ENCODE measurements at regions of chrX and their contacts with region 1.

Region 1: GRCh38 chrX:129726307-129727111 is 12.3 kb upstream of the XPNPEP2 start:
- DNase-seq: peak; percentile 52
- H3K4me3 Mint-ChIP-seq: no peak overlapping the region
- H3K27ac Mint-ChIP-seq: no peak overlapping the region
- H3K4me1 Mint-ChIP-seq: peaks cover 31% of the 10 kb centered on the region
- H3K27me3 Mint-ChIP-seq: no peaks in the 10 kb centered on the region

Region 2: DNA sequence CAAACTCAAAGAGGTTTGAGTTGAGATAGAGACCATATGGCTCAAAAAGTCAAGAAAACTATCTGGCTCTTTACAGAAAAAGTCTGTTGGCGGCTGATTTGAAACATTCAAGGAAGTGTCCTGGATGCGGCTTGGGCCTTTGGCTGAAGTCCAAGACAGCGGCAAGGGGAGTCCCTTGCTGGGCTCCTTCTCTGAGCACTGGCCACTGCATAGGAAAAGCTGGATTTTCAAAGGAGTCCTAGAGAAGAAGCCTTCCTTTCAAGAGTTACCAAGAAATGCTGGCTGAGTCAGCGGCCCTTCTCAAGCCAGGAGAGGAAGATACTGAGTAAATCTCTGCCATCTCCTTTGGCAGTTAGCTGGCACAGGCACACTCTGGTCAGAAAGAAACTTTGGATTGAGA is 83.9 kb before region 1 on chrX:
- CTCF ChIA-PET with region 1: interaction called, 70 read pairs
- POLR2A ChIA-PET with region 1: no interaction called
- intact Hi-C with region 1: loop called (anchors 1 kb)
- DNase-seq: no peak
- H3K4me3 Mint-ChIP-seq: no peak overlapping the region
- H3K27ac Mint-ChIP-seq: no peak overlapping the region
- H3K4me1 Mint-ChIP-seq: no peaks in the 10 kb centered on the region
- H3K27me3 Mint-ChIP-seq: no peaks in the 10 kb centered on the region

Region 3: GRCh38 chrX:129654419-129655165 is 71.9 kb before region 1 on chrX and contains the start of gene APLN:
- CTCF ChIA-PET with region 1: interaction called, 9 read pairs
- POLR2A ChIA-PET with region 1: no interaction called
- intact Hi-C with region 1: loop called (anchors 5 kb)
- DNase-seq: peak; percentile 22
- H3K4me3 Mint-ChIP-seq: peak within 1 kb of the TSS; percentile 59
- H3K27ac Mint-ChIP-seq: no peak within 1 kb of the TSS
- H3K4me1 Mint-ChIP-seq: peaks cover 8% of the 10 kb centered on the region
- H3K27me3 Mint-ChIP-seq: peaks cover 15% of the 10 kb centered on the region
- total RNA-seq, gene APLN: 0.26 to 0.36 TPM

Region 4: GRCh38 chrX:129772796-129773431 is 46.4 kb after region 1 on chrX:
- CTCF ChIA-PET with region 1: no interaction called
- POLR2A ChIA-PET with region 1: no interaction called
- intact Hi-C with region 1: no loop called
- DNase-seq: peak; percentile 70
- H3K4me3 Mint-ChIP-seq: peak overlapping the region; percentile 48
- H3K27ac Mint-ChIP-seq: peak overlapping the region; percentile 92
- H3K4me1 Mint-ChIP-seq: peaks cover 64% of the 10 kb centered on the region
- H3K27me3 Mint-ChIP-seq: no peaks in the 10 kb centered on the region

Region 5: GRCh38 chrX:129804806-129805205 is 78.3 kb after region 1 on chrX:
- CTCF ChIA-PET with region 1: no interaction called
- POLR2A ChIA-PET with region 1: no interaction called
- intact Hi-C with region 1: no loop called
- DNase-seq: no peak
- H3K4me3 Mint-ChIP-seq: no peak overlapping the region
- H3K27ac Mint-ChIP-seq: no peak overlapping the region
- H3K4me1 Mint-ChIP-seq: peaks cover 22% of the 10 kb centered on the region
- H3K27me3 Mint-ChIP-seq: no peaks in the 10 kb centered on the region

Region 6: DNA sequence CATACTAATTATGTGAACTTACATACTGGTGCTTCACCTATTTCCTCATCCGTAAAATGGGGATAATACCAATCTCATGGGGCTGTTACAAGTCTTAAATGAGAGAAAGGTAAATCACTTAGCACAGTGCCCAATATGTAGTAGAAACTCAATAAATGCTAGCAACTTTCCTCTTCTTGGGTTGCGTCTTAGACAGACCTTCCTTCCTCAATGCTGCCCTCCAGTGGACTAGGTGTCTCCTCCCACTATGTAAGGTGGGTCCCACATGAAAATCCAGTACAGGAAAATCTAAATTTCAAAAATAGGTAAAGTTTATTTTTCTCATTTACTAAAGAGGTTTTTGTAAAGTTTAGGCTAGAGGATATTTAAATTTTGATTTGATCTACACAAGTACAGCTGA is 96.6 kb after region 1 on chrX:
- CTCF ChIA-PET with region 1: interaction called, 12 read pairs
- POLR2A ChIA-PET with region 1: no interaction called
- intact Hi-C with region 1: no loop called
- DNase-seq: peak; percentile 46
- H3K4me3 Mint-ChIP-seq: no peak overlapping the region
- H3K27ac Mint-ChIP-seq: peak overlapping the region; percentile 81
- H3K4me1 Mint-ChIP-seq: peaks cover 16% of the 10 kb centered on the region
- H3K27me3 Mint-ChIP-seq: no peaks in the 10 kb centered on the region

Region 7: GRCh38 chrX:130009658-130010223 is 283.2 kb after region 1 on chrX:
- CTCF ChIA-PET with region 1: no interaction called
- POLR2A ChIA-PET with region 1: no interaction called
- intact Hi-C with region 1: no loop called
- DNase-seq: no peak
- H3K4me3 Mint-ChIP-seq: no peak overlapping the region
- H3K27ac Mint-ChIP-seq: no peak overlapping the region
- H3K4me1 Mint-ChIP-seq: no peaks in the 10 kb centered on the region
- H3K27me3 Mint-ChIP-seq: no peaks in the 10 kb centered on the region

Measured in activated CD4-positive, alpha-beta memory T cell treated with anti-CD3 and anti-CD28 coated beads for 36 hours (primary cell).